ENCODE measurements at regions of chrX and their contacts with region 1.

Region 1: DNA sequence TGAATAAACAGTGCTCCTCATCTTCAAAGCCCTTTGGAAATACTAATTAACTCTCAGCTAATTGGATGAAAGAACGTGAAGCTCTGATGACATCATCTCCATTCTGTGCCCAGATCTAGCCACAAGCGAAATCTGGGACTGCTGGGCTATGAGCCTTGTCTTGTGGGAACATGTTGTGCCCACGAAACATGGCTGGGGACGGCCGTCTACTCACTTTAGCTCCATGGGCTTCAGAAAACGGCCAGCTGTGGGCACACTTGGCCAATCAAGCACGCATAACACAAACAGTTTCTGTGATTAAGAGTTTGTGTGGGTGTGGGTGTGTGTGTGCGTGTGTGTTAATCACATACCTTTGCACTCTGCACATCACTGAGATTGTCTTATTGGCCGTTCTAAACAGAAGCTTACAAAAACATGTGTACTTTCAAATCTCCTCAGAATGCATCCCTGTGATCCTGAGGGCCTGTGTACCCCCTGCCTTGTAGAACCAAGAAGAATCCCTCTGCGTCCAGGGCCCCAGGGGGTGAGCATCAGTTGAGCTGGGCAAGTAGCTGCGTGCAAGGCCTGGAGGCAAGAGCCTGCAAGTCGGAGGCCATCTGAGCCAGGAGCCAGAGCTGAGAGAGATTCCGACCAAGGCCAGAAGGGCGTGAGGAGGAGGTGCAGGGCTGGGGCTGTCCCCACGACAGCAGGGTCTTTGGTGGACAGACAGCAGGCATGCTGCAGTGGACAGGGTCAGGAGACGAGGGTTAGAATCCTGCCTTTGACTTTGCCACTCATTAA is 18.7 kb upstream of the ZNF185 start:
- DNase-seq: no peak
- H3K4me3 ChIP-seq: no peak overlapping the region
- H3K27ac ChIP-seq: peak overlapping the region; percentile 67 to 79 (median 68)
- H3K4me1 ChIP-seq: peaks cover 0 to 33% (median 7%) of the 10 kb centered on the region in 3 donors
- H3K27me3 ChIP-seq: no peaks in the 10 kb centered on the region
- CTCF ChIP-seq: no peak
- POLR2A ChIP-seq: no peak

Region 2: GRCh38 chrX:152520653-152521052 is 358.5 kb before region 1 on chrX:
- intact Hi-C with region 1: no loop called
- DNase-seq: no peak
- H3K4me3 ChIP-seq: no peak overlapping the region
- H3K27ac ChIP-seq: no peak overlapping the region
- H3K4me1 ChIP-seq: no peaks in the 10 kb centered on the region
- H3K27me3 ChIP-seq: no peaks in the 10 kb centered on the region
- CTCF ChIP-seq: no peak
- POLR2A ChIP-seq: no peak

Region 3: GRCh38 chrX:152573866-152574265 is 305.3 kb before region 1 on chrX:
- intact Hi-C with region 1: no loop called
- DNase-seq: no peak
- H3K4me3 ChIP-seq: no peak overlapping the region
- H3K27ac ChIP-seq: no peak overlapping the region
- H3K4me1 ChIP-seq: peaks cover 0 to 7% (median 0%) of the 10 kb centered on the region in 3 donors
- H3K27me3 ChIP-seq: no peaks in the 10 kb centered on the region
- CTCF ChIP-seq: no peak
- POLR2A ChIP-seq: no peak

Region 4: GRCh38 chrX:152936357-152936756 is 57.2 kb after region 1 on chrX:
- intact Hi-C with region 1: loop called (anchors 10 kb)
- DNase-seq: no peak
- H3K4me3 ChIP-seq: no peak overlapping the region
- H3K27ac ChIP-seq: no peak overlapping the region
- H3K4me1 ChIP-seq: peaks cover 0 to 5% (median 0%) of the 10 kb centered on the region in 3 donors
- H3K27me3 ChIP-seq: no peaks in the 10 kb centered on the region
- CTCF ChIP-seq: no peak
- POLR2A ChIP-seq: no peak

Region 5: DNA sequence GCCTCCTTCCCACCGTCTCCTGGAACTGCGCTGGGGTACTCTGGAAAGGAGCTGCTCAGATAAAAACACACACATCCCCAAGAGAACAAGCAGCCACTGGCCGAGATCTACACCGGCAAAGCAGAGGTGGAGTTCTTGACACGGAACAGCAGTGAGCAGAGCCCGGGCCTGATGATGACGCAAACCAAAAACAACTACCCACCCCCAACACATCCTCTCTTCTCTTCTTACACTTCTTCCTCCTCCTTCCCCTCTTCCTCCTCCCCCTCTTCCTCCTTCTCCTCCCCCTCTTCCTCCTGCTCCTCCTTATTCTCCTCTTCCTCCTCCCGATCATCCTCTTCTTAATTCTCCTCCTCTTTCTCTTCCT is 110.1 kb after region 1 on chrX:
- intact Hi-C with region 1: no loop called
- DNase-seq: no peak
- H3K4me3 ChIP-seq: no peak overlapping the region
- H3K27ac ChIP-seq: no peak overlapping the region
- H3K4me1 ChIP-seq: no peaks in the 10 kb centered on the region
- H3K27me3 ChIP-seq: no peaks in the 10 kb centered on the region
- CTCF ChIP-seq: no peak
- POLR2A ChIP-seq: no peak

Region 6: GRCh38 chrX:153443481-153444332 is 564.5 kb after region 1 on chrX:
- intact Hi-C with region 1: no loop called
- DNase-seq: no peak
- H3K4me3 ChIP-seq: no peak overlapping the region
- H3K27ac ChIP-seq: no peak overlapping the region
- H3K4me1 ChIP-seq: peaks cover 0 to 14% (median 0%) of the 10 kb centered on the region in 3 donors
- H3K27me3 ChIP-seq: peaks cover 0 to 9% (median 0%) of the 10 kb centered on the region in 4 donors
- CTCF ChIP-seq: no peak
- POLR2A ChIP-seq: no peak

Measured in esophagus squamous epithelium (tissue), 5 donors.